Heart left ventricle (tissue), 16 donors: ENCODE measurements at regions of chr1 and their contacts with region 1.

Region 1: GRCh38 chr1:201709564-201710295 is 119.2 kb upstream of the IPO9 start:
- DNase-seq: peak; percentile 78 to 91 (median 80)
- ATAC-seq: peak; percentile 40 to 63 (median 54)
- H3K4me3 ChIP-seq: no peak overlapping the region
- H3K27ac ChIP-seq: peak overlapping the region in 11 of 12 donors; percentile 2 to 98 (median 91)
- H3K4me1 ChIP-seq: peaks cover 21 to 76% (median 60%) of the 10 kb centered on the region in 12 donors
- H3K27me3 ChIP-seq: no peaks in the 10 kb centered on the region
- CTCF ChIP-seq: peak; percentile 93 to 99 (median 97)
- POLR2A ChIP-seq: peak in 1 of 2 donors; percentile 8

Region 2: DNA sequence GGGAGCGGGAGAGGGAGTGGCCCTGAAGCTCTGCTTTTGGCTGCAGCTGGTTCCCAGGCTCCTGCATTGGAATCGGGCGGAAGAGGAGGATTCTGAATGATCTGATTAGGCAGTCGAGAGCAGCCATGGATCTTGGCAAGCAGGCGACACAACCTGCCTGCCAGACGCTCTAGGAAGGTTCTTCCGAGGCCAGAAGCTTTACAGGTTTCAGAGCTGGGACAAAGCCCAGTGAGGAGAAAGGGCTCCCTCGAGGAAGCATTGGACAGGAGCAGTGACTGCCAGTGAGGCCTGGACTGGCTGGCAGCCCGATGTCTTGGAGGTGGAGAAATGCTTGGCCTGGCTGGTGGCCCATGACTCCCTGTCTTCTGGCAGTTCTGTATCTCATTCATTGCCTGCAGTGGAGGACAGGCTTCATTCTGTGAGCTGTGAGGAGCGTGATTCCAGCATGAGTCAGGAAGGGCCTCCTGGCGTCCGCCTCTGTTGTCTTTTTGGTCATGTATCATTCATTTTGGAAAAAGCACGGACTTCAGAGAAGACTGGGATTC is 13.4 kb before region 1 on chr1:
- intact Hi-C with region 1: no loop called
- DNase-seq: peak; percentile 81 to 94 (median 91)
- ATAC-seq: peak; percentile 65 to 88 (median 84)
- H3K4me3 ChIP-seq: peak overlapping the region in 1 of 12 donors; percentile 14
- H3K27ac ChIP-seq: peak overlapping the region in 11 of 12 donors; percentile 40 to 72 (median 60)
- H3K4me1 ChIP-seq: peaks cover 4 to 72% (median 57%) of the 10 kb centered on the region in 12 donors
- H3K27me3 ChIP-seq: no peaks in the 10 kb centered on the region
- CTCF ChIP-seq: peak in 1 of 12 donors; percentile 33
- POLR2A ChIP-seq: no peak

Region 3: GRCh38 chr1:201756406-201756805 is 46.7 kb after region 1 on chr1:
- intact Hi-C with region 1: loop called in 1 of 10 experiments (anchors 5 kb)
- DNase-seq: no peak
- ATAC-seq: no peak
- H3K4me3 ChIP-seq: no peak overlapping the region
- H3K27ac ChIP-seq: peak overlapping the region in 5 of 12 donors; percentile 4 to 50 (median 9)
- H3K4me1 ChIP-seq: peaks cover 15 to 100% (median 93%) of the 10 kb centered on the region in 12 donors
- H3K27me3 ChIP-seq: no peaks in the 10 kb centered on the region
- CTCF ChIP-seq: no peak
- POLR2A ChIP-seq: no peak

Region 4: GRCh38 chr1:201982623-201983379 is 273.1 kb after region 1 on chr1 and contains the start of gene RNPEP:
- intact Hi-C with region 1: loop called in 1 of 10 experiments (anchors 10 kb)
- DNase-seq: peak; percentile 81 to 85 (median 83)
- ATAC-seq: peak; percentile 65 to 92 (median 88)
- H3K4me3 ChIP-seq: peak within 1 kb of the TSS; percentile 75 to 100 (median 96)
- H3K27ac ChIP-seq: peak within 1 kb of the TSS; percentile 43 to 98 (median 94)
- H3K4me1 ChIP-seq: peaks cover 0 to 39% (median 16%) of the 10 kb centered on the region in 12 donors
- H3K27me3 ChIP-seq: no peaks in the 10 kb centered on the region
- CTCF ChIP-seq: peak in 4 of 12 donors; percentile 4 to 18 (median 10)
- POLR2A ChIP-seq: peak; percentile 33 to 70
- total RNA-seq, gene RNPEP: 14.1 to 36.2 (median 18.1) TPM